Activated naive CD4-positive, alpha-beta T cell treated with anti-CD3 and anti-CD28 coated beads for 36 hours (primary cell): ENCODE measurements at regions of chr2 and their contacts with region 1.

Region 1: DNA sequence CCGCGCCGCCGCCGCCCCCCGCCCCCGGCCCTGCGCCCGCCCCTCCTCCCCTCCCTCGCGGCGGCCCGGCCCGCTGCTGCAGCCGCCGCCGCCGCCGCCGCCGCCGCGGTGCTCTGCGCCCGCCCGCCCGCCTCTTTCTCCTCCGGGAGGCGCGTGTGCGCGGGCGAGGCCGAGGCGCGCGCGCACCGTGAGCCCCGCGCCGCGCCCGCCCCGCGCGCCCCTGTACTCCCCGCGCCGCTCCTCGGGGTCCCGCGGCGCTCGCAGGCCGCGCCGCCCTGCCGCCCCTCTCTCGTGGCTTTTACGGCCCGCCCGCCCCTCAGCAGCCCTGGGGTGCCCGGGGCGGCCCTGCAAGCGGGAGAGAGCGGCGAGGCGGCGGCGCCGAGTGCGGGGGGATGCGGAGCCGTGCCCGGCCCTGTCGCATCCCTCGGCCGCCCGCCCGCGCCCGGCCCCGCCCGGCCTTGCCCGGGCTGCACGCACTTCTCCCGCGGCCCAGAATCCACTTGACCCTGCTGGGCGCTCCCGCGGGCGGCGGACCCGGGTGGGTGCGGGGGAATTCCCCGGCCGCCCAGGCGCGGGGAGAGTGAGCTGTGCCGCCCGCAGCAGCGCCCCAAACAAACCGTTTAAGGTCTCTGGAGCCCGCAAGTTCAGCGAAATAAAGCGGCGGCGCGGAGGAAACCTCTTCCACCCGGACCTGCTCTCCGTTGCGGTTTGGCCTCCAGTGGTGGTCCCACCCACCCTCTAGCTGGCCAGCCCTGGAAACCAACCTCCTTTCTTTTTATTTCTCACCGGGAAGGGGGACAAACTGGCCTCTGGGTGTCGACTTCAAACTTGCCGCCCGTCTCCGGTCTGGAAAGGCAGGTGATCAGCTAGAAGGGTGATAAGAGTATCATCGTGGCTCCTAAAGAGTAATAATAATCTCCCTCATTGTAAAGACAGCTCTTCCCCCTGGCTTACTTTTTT is 37.4 kb downstream of the AFF3 start:
- DNase-seq: peak; percentile 15
- H3K4me3 Mint-ChIP-seq: peak overlapping the region; percentile 79
- H3K27ac Mint-ChIP-seq: peak overlapping the region; percentile 50
- H3K4me1 Mint-ChIP-seq: peaks cover 14% of the 10 kb centered on the region
- H3K27me3 Mint-ChIP-seq: peaks cover 11% of the 10 kb centered on the region

Region 2: DNA sequence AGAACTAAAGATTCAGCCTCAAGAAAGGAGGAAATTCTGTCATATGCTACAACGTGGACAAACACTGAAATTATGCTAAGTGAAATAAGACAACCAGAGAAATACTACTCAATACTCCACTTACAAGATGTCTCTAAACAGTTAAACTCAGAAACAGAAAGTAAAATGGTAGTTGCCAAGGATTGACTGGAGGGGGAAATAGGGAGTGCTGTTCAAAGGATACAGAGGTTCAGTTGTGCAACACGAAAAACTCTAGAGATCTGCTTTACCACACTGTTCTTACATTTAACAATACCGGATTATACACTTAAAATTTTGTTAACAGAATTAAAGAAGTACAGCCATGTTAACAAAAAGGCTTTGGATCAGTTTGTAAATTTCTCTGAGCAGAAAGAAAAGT is 1003.3 kb before region 1 on chr2:
- CTCF ChIA-PET with region 1: no interaction called
- intact Hi-C with region 1: no loop called
- DNase-seq: no peak
- H3K4me3 Mint-ChIP-seq: no peak overlapping the region
- H3K27ac Mint-ChIP-seq: no peak overlapping the region
- H3K4me1 Mint-ChIP-seq: peaks cover 12% of the 10 kb centered on the region
- H3K27me3 Mint-ChIP-seq: no peaks in the 10 kb centered on the region

Region 3: DNA sequence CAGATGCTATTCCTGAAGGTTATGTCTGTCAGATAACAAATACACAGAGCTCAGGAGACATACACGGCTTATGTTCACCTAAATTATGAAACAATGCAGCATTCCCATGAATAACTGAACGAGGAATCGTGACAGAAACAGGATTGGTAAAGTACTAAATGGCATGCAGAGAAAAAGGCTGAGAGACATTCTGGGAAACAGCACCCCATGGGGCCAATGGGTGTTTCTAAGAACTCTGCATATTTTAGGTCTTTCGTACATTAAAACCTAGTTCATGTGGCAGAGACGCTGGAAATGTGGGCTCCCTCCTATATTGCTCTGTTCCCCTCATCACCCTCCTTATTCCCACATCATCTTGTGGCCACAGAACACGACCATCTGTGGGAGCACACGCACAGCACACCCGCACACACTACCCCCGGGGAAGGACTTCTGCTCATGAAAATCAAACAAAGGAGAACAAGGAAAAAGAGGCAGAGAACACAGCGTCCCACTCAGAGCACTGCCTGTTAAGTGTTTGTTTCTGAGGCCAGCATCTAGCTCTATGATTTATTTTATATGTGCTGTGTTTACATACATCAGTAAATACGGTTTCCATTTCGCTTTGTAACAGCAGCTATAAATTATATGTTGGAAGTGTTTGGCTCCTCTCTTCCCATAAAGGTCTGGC is 106.2 kb before region 1 on chr2:
- CTCF ChIA-PET with region 1: no interaction called
- intact Hi-C with region 1: no loop called
- DNase-seq: no peak
- H3K4me3 Mint-ChIP-seq: no peak overlapping the region
- H3K27ac Mint-ChIP-seq: no peak overlapping the region
- H3K4me1 Mint-ChIP-seq: peaks cover 7% of the 10 kb centered on the region
- H3K27me3 Mint-ChIP-seq: no peaks in the 10 kb centered on the region

Region 4: DNA sequence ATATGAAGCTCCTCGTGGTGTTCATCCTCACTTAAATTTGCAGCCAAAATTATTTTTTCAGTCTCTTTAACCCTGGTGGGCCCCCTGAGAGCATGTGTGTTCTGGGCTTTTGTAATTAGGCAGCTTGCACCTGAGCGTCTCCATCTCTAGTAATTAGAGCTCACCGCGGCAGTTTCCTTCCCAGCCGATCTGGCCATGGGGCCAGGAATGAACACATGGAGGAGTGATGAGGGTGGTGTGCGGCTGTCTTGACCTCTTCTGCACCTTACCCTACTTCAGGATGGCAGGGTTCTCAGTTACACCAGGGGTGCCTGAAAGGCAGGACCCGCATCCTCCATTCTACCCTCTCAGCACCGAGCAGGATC is 61.1 kb before region 1 on chr2:
- CTCF ChIA-PET with region 1: no interaction called
- intact Hi-C with region 1: no loop called
- DNase-seq: no peak
- H3K4me3 Mint-ChIP-seq: no peak overlapping the region
- H3K27ac Mint-ChIP-seq: no peak overlapping the region
- H3K4me1 Mint-ChIP-seq: no peaks in the 10 kb centered on the region
- H3K27me3 Mint-ChIP-seq: no peaks in the 10 kb centered on the region

Region 5: GRCh38 chr2:100126201-100126600 is 21.2 kb after region 1 on chr2:
- CTCF ChIA-PET with region 1: no interaction called
- intact Hi-C with region 1: no loop called
- DNase-seq: no peak
- H3K4me3 Mint-ChIP-seq: no peak overlapping the region
- H3K27ac Mint-ChIP-seq: no peak overlapping the region
- H3K4me1 Mint-ChIP-seq: peaks cover 6% of the 10 kb centered on the region
- H3K27me3 Mint-ChIP-seq: no peaks in the 10 kb centered on the region

Region 6: DNA sequence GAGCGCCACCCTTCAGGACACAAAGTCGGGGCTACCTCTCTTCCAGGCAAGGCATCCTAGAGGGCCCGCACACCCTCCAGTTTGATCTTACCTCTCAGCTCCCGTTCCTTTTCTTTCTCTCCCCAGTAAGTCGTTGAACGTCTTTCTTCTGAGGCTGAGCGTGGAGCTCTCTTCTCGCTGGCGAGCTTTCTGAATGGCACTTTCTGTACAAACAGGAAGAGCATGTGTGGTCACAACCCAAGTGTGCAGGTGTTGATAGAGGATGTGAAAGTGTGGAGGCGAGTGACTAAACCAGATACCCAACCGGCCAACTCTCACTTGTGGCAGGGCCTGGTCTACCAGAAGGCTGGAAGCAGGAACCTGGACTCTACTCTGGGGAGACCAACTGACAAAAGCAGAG is 37.4 kb after region 1 on chr2 and contains the start of gene AFF3:
- CTCF ChIA-PET with region 1: no interaction called
- intact Hi-C with region 1: loop called (anchors 2 kb)
- DNase-seq: peak; percentile 79
- H3K4me3 Mint-ChIP-seq: peak within 1 kb of the TSS; percentile 71
- H3K27ac Mint-ChIP-seq: peak within 1 kb of the TSS; percentile 73
- H3K4me1 Mint-ChIP-seq: peaks cover 54% of the 10 kb centered on the region
- H3K27me3 Mint-ChIP-seq: peaks cover 2% of the 10 kb centered on the region
- total RNA-seq, gene AFF3: 1.5 to 2.1 TPM